ENCODE measurements at regions of chr6 and their contacts with region 1.

Region 1: DNA sequence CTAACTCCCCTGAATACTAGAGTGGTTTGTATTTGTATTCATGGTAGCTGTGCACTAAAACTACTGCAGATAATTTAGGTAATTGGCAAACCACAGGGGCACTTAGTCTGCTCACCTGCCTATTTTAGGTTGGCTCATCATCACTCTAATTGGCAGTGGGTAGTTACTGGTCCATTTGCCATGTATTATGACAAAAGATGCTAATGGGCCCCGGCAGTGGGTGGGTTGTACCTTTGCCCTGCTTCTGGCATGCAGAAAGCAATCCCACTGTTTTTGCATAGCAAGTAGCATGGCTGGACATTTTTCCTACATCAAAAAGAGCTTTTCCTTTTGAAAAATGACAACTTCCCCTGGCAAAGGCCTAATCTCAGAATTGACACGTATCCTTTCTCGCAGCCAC is 741.4 kb upstream of the MAP3K7 start:
- DNase-seq: no peak
- ATAC-seq: no peak
- H3K4me3 ChIP-seq: no peak overlapping the region
- H3K27ac ChIP-seq: no peak overlapping the region
- H3K4me1 ChIP-seq: no peaks in the 10 kb centered on the region
- H3K27me3 ChIP-seq: no peaks in the 10 kb centered on the region
- CTCF ChIP-seq: no peak
- EP300 ChIP-seq: no peak
- POLR2A ChIP-seq: no peak
- RAD21 ChIP-seq: no peak

Region 2: DNA sequence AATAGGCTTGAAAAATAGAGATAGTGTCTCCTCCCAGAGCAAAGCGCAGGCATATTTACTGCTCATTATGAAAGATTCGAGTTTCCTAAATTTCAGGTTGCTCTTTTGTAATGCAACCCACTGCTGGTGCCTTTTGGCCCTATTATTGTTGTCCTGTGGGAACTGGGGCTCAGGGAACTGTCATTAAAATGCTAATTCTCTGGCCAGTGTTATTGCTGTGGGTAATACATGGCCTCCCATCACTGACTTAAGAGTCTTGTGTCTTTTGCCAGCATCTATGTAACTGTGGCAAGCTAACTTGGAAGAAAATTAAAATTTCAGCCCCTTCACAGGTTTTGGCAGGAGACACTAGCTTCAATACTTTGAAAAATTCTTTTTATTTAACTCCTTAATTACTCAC is 12.8 kb after region 1 on chr6:
- CTCF ChIA-PET with region 1: interaction called, 15 read pairs
- POLR2A ChIA-PET with region 1: no interaction called
- RAD21 ChIA-PET with region 1: interaction called, 12 read pairs
- SMC1A ChIA-PET with region 1: interaction called, 19 read pairs
- in situ Hi-C with region 1: no loop called
- intact Hi-C with region 1: no loop called
- DNase-seq: no peak
- ATAC-seq: no peak
- H3K4me3 ChIP-seq: no peak overlapping the region
- H3K27ac ChIP-seq: no peak overlapping the region
- H3K4me1 ChIP-seq: no peaks in the 10 kb centered on the region
- H3K27me3 ChIP-seq: no peaks in the 10 kb centered on the region
- CTCF ChIP-seq: no peak
- EP300 ChIP-seq: no peak
- POLR2A ChIP-seq: no peak
- RAD21 ChIP-seq: no peak

Region 3: GRCh38 chr6:91442342-91442741 is 114.1 kb after region 1 on chr6:
- CTCF ChIA-PET with region 1: interaction called, 6 read pairs
- POLR2A ChIA-PET with region 1: no interaction called
- RAD21 ChIA-PET with region 1: interaction called, 6 read pairs
- SMC1A ChIA-PET with region 1: interaction called, 25 read pairs
- in situ Hi-C with region 1: no loop called
- intact Hi-C with region 1: no loop called
- DNase-seq: no peak
- ATAC-seq: peak; percentile 20; the same call in 1 of the 3 replicates
- H3K4me3 ChIP-seq: no peak overlapping the region
- H3K27ac ChIP-seq: peak overlapping the region; percentile 48
- H3K4me1 ChIP-seq: no peaks in the 10 kb centered on the region
- H3K27me3 ChIP-seq: no peaks in the 10 kb centered on the region
- CTCF ChIP-seq: no peak
- EP300 ChIP-seq: no peak
- POLR2A ChIP-seq: no peak
- RAD21 ChIP-seq: no peak

Region 4: GRCh38 chr6:91534614-91535013 is 206.4 kb after region 1 on chr6:
- CTCF ChIA-PET with region 1: interaction called, 9 read pairs
- POLR2A ChIA-PET with region 1: no interaction called
- RAD21 ChIA-PET with region 1: interaction called, 3 read pairs
- SMC1A ChIA-PET with region 1: interaction called, 6 read pairs
- in situ Hi-C with region 1: no loop called
- intact Hi-C with region 1: loop called (anchors 5 kb)
- DNase-seq: no peak
- ATAC-seq: no peak
- H3K4me3 ChIP-seq: no peak overlapping the region
- H3K27ac ChIP-seq: no peak overlapping the region
- H3K4me1 ChIP-seq: no peaks in the 10 kb centered on the region
- H3K27me3 ChIP-seq: no peaks in the 10 kb centered on the region
- CTCF ChIP-seq: no peak; a peak in 1 of 6 replicates
- EP300 ChIP-seq: no peak
- POLR2A ChIP-seq: no peak
- RAD21 ChIP-seq: peak; percentile 48

Region 5: DNA sequence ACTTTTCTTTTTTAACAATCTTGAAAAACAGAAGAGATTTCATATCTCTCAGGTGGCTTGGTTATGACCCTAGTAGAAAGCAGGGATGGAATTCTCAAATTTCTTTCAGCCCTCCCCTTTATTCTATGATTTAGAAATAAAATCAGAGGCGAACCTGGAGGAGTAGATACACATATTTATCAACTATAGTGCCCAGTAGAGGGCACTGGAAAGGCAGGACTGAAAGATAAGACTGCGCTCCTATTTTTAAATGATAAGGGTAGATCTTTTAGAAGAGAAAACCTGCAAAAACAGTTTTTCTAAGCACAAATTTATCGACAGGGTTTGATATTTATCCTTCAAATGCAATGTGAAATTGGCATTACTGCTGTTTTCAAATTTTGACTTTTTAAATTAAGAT is 794.5 kb after region 1 on chr6:
- CTCF ChIA-PET with region 1: interaction called, 20 read pairs
- POLR2A ChIA-PET with region 1: no interaction called
- RAD21 ChIA-PET with region 1: interaction called, 4 read pairs
- SMC1A ChIA-PET with region 1: interaction called, 17 read pairs
- in situ Hi-C with region 1: no loop called
- intact Hi-C with region 1: loop called (anchors 5 kb)
- DNase-seq: no peak
- ATAC-seq: peak; percentile 59; the same call in 2 of the 3 replicates
- H3K4me3 ChIP-seq: no peak overlapping the region
- H3K27ac ChIP-seq: no peak overlapping the region
- H3K4me1 ChIP-seq: no peaks in the 10 kb centered on the region
- H3K27me3 ChIP-seq: no peaks in the 10 kb centered on the region
- CTCF ChIP-seq: peak in 2 of 3 experiments; percentile 13 to 29; a peak in 3 of 6 replicates
- EP300 ChIP-seq: no peak
- POLR2A ChIP-seq: no peak
- RAD21 ChIP-seq: peak; percentile 34; the same call in 1 of the 2 replicates

Region 6: GRCh38 chr6:92892600-92893170 is 1564.4 kb after region 1 on chr6:
- CTCF ChIA-PET with region 1: no interaction called
- POLR2A ChIA-PET with region 1: no interaction called
- RAD21 ChIA-PET with region 1: no interaction called
- SMC1A ChIA-PET with region 1: no interaction called
- in situ Hi-C with region 1: no loop called
- intact Hi-C with region 1: no loop called
- DNase-seq: no peak
- ATAC-seq: no peak
- H3K4me3 ChIP-seq: no peak overlapping the region
- H3K27ac ChIP-seq: no peak overlapping the region
- H3K4me1 ChIP-seq: no peaks in the 10 kb centered on the region
- H3K27me3 ChIP-seq: no peaks in the 10 kb centered on the region
- CTCF ChIP-seq: no peak
- EP300 ChIP-seq: no peak
- POLR2A ChIP-seq: no peak
- RAD21 ChIP-seq: no peak

Measured in GM12878 (cell line).